ENCODE measurements at regions of chr17 and their contacts with region 1.

Region 1: DNA sequence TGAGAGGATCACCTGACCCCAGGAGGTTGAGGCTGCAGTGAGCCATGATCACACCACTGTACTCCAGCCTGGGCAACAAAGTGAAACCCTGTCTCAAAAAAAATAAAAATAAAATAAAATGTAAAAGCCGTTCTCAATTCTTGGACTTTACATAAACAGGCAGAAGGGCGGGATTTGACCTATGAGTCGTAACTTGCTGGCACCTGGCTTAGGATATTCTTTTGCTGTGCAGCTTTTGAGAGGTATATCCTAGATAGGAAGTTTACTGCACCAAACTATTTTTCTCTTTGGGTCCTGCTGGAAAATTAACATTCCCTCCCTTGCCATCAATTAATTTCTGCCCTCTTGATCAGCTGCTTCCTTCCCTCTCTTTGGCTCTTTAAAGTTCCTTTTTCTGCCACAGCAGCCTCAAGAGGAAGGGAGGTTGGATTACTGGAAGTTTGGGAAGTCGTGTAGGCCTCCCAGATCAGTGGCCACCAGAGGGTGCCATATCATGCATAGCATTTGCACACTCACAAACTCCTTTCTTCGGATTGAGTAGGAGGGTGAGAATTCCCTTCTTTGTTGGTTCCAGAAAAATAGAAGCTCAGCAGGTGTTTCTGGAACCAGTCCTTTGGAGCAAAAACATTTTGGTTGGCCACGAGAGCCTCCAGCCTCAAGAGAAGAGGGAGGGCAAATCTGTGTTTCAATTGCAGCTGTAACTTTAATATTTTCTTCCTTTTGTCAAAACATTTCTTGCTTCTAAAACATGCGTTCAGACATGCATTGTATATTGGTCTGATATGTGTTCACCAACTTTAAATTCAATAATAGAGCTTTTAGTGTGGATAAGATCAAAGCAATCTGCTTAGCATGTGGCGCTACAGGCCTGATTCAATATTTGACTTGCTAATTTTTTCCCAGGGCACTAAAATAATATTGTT is 147.3 kb downstream of the CCDC182 start:
- DNase-seq: no peak
- ATAC-seq: no peak
- H3K4me3 ChIP-seq: no peak overlapping the region
- H3K27ac ChIP-seq: no peak overlapping the region
- H3K4me1 ChIP-seq: peaks cover 16% of the 10 kb centered on the region
- H3K27me3 ChIP-seq: no peaks in the 10 kb centered on the region
- CTCF ChIP-seq: peak; percentile 49 to 72 (median 61)
- EP300 ChIP-seq: no peak
- POLR2A ChIP-seq: no peak
- RAD21 ChIP-seq: peak; percentile 57

Region 2: DNA sequence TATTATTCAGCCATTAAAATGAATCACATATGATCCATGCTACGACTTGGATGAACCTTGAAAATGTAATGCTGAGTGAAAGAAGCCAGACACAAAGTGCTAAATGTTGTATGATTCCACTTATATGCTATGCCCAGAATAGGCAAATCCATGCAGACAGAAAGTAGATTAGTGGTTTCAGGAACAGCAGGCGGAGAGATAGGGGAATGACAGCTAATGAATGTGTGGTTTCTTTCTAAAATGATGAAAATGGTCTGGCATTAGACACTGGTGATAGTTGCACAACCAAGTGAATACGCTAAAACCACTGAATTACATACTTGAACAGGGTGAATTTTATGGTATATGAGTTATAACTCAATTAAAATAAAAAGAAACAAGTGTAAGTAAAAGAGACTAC is 1126.1 kb before region 1 on chr17:
- CTCF ChIA-PET with region 1: no interaction called
- POLR2A ChIA-PET with region 1: no interaction called
- RAD21 ChIA-PET with region 1: no interaction called
- SMC1A ChIA-PET with region 1: no interaction called
- in situ Hi-C with region 1: no loop called
- intact Hi-C with region 1: no loop called
- DNase-seq: no peak
- ATAC-seq: no peak
- H3K4me3 ChIP-seq: no peak overlapping the region
- H3K27ac ChIP-seq: no peak overlapping the region
- H3K4me1 ChIP-seq: no peaks in the 10 kb centered on the region
- H3K27me3 ChIP-seq: no peaks in the 10 kb centered on the region
- CTCF ChIP-seq: no peak
- EP300 ChIP-seq: no peak
- POLR2A ChIP-seq: no peak
- RAD21 ChIP-seq: no peak

Region 3: GRCh38 chr17:57552114-57552624 is 45.6 kb before region 1 on chr17:
- CTCF ChIA-PET with region 1: interaction called, 25 read pairs
- POLR2A ChIA-PET with region 1: interaction called, 5 read pairs
- RAD21 ChIA-PET with region 1: no interaction called
- SMC1A ChIA-PET with region 1: interaction called, 4 read pairs
- in situ Hi-C with region 1: no loop called
- intact Hi-C with region 1: no loop called
- DNase-seq: no peak
- ATAC-seq: peak; percentile 91
- H3K4me3 ChIP-seq: no peak overlapping the region
- H3K27ac ChIP-seq: peak overlapping the region; percentile 89
- H3K4me1 ChIP-seq: peaks cover 34% of the 10 kb centered on the region
- H3K27me3 ChIP-seq: no peaks in the 10 kb centered on the region
- CTCF ChIP-seq: peak; percentile 59 to 84 (median 77)
- EP300 ChIP-seq: no peak
- POLR2A ChIP-seq: peak; percentile 35; the same call in 1 of the 2 replicates
- RAD21 ChIP-seq: peak; percentile 64

Region 4: GRCh38 chr17:57612202-57613071 is 14.6 kb after region 1 on chr17:
- CTCF ChIA-PET with region 1: interaction called, 11 read pairs
- POLR2A ChIA-PET with region 1: no interaction called
- RAD21 ChIA-PET with region 1: interaction called, 3 read pairs
- SMC1A ChIA-PET with region 1: interaction called, 12 read pairs
- in situ Hi-C with region 1: no loop called
- intact Hi-C with region 1: no loop called
- DNase-seq: peak; percentile 38
- ATAC-seq: peak; percentile 98
- H3K4me3 ChIP-seq: no peak overlapping the region
- H3K27ac ChIP-seq: no peak overlapping the region; the same call in 1 of the 2 replicates
- H3K4me1 ChIP-seq: peaks cover 4% of the 10 kb centered on the region
- H3K27me3 ChIP-seq: no peaks in the 10 kb centered on the region
- CTCF ChIP-seq: no peak
- EP300 ChIP-seq: no peak; a peak in 1 of 4 replicates
- POLR2A ChIP-seq: no peak
- RAD21 ChIP-seq: no peak

Region 5: DNA sequence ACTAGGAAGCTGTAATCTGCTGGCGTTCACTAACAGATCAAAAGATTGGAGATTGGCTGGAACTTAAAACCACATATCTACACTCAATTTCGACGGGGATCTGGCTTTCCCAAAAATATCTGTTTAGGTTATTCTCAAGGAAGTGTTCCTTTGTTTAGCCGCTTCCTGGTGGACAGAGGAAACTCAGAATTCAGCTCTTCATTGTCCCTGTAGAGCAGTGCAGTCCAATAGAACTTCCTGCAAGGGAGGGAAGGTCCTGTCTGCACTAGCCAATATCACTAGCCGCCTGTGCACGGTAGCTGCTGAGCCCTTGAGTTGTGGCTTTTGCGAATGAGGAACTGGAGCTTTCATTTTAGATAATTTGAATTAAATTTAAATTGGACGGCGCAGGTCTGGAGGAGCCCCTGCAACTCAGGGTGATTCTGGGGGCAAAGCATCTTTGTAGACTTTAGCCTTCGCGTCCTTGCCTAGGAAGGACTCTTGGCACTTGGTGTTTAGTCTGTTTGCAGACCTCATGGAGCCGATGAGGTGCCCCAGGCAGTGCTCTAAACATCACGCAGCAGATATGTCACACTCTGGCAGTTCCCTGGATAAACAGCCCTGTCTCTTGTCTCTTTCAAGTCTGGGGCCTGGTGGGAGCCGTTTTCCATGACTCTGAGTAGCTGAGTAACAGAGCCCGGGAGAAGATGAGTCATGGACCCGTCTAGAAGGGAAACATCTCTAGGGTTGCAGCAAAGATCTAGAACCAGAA is 25.1 kb after region 1 on chr17:
- CTCF ChIA-PET with region 1: interaction called, 21 read pairs
- POLR2A ChIA-PET with region 1: no interaction called
- RAD21 ChIA-PET with region 1: no interaction called
- SMC1A ChIA-PET with region 1: interaction called, 14 read pairs
- in situ Hi-C with region 1: no loop called
- intact Hi-C with region 1: no loop called
- DNase-seq: peak; percentile 34
- ATAC-seq: peak; percentile 96
- H3K4me3 ChIP-seq: peak overlapping the region; percentile 43
- H3K27ac ChIP-seq: peak overlapping the region; percentile 72
- H3K4me1 ChIP-seq: peaks cover 32% of the 10 kb centered on the region
- H3K27me3 ChIP-seq: no peaks in the 10 kb centered on the region
- CTCF ChIP-seq: no peak
- EP300 ChIP-seq: 0 out of 4 replicates have a peak, but pooled peaks of 1 of the 2 experiments have one; percentile 27
- POLR2A ChIP-seq: no peak
- RAD21 ChIP-seq: no peak

Region 6: GRCh38 chr17:57747221-57748017 is 149.6 kb after region 1 on chr17:
- CTCF ChIA-PET with region 1: interaction called, 9 read pairs
- POLR2A ChIA-PET with region 1: no interaction called
- RAD21 ChIA-PET with region 1: no interaction called
- SMC1A ChIA-PET with region 1: interaction called, 3 read pairs
- in situ Hi-C with region 1: no loop called
- intact Hi-C with region 1: loop called (anchors 2 kb)
- DNase-seq: no peak
- ATAC-seq: peak; percentile 83
- H3K4me3 ChIP-seq: no peak overlapping the region
- H3K27ac ChIP-seq: no peak overlapping the region
- H3K4me1 ChIP-seq: peaks cover 12% of the 10 kb centered on the region
- H3K27me3 ChIP-seq: no peaks in the 10 kb centered on the region; a peak in 2 of 4 replicates
- CTCF ChIP-seq: peak; percentile 79 to 87 (median 84)
- EP300 ChIP-seq: no peak
- POLR2A ChIP-seq: no peak
- RAD21 ChIP-seq: peak; percentile 94

Measured in GM12878 (cell line).